CD14-positive monocyte (primary cell): ENCODE measurements at regions of chr11 and their contacts with region 1.

Region 1: GRCh38 chr11:122628810-122629555 is 26.5 kb upstream of the UBASH3B start:
- DNase-seq: peak; percentile 70 to 75 (median 70)
- H3K4me3 ChIP-seq: no peak overlapping the region
- H3K4me3 Mint-ChIP-seq: peak overlapping the region in 1 of 2 donors; percentile 29
- H3K27ac ChIP-seq: no peak overlapping the region
- H3K27ac Mint-ChIP-seq: peak overlapping the region in 1 of 7 donors; percentile 46
- H3K4me1 ChIP-seq: peaks cover 0 to 6% of the 10 kb centered on the region in 2 donors
- H3K4me1 Mint-ChIP-seq: peaks cover 14% of the 10 kb centered on the region
- H3K27me3 ChIP-seq: no peaks in the 10 kb centered on the region
- H3K27me3 Mint-ChIP-seq: peaks cover 0 to 10% (median 3%) of the 10 kb centered on the region in 3 donors
- CTCF ChIP-seq: peak; percentile 84

Region 2: GRCh38 chr11:122754553-122755322 is 125.8 kb after region 1 on chr11:
- intact Hi-C with region 1: loop called (anchors 2 to 5 kb)
- DNase-seq: peak; percentile 29 to 60 (median 55)
- H3K4me3 ChIP-seq: no peak overlapping the region
- H3K4me3 Mint-ChIP-seq: peak overlapping the region in 1 of 2 donors; percentile 55
- H3K27ac ChIP-seq: peak overlapping the region in 1 of 2 donors; percentile 76
- H3K27ac Mint-ChIP-seq: peak overlapping the region in 5 of 7 donors; percentile 38 to 95 (median 91)
- H3K4me1 ChIP-seq: peaks cover 32 to 47% of the 10 kb centered on the region in 2 donors
- H3K4me1 Mint-ChIP-seq: peaks cover 45% of the 10 kb centered on the region
- H3K27me3 ChIP-seq: no peaks in the 10 kb centered on the region
- H3K27me3 Mint-ChIP-seq: peaks cover 0 to 3% (median 1%) of the 10 kb centered on the region in 3 donors
- CTCF ChIP-seq: peak; percentile 83

Region 3: DNA sequence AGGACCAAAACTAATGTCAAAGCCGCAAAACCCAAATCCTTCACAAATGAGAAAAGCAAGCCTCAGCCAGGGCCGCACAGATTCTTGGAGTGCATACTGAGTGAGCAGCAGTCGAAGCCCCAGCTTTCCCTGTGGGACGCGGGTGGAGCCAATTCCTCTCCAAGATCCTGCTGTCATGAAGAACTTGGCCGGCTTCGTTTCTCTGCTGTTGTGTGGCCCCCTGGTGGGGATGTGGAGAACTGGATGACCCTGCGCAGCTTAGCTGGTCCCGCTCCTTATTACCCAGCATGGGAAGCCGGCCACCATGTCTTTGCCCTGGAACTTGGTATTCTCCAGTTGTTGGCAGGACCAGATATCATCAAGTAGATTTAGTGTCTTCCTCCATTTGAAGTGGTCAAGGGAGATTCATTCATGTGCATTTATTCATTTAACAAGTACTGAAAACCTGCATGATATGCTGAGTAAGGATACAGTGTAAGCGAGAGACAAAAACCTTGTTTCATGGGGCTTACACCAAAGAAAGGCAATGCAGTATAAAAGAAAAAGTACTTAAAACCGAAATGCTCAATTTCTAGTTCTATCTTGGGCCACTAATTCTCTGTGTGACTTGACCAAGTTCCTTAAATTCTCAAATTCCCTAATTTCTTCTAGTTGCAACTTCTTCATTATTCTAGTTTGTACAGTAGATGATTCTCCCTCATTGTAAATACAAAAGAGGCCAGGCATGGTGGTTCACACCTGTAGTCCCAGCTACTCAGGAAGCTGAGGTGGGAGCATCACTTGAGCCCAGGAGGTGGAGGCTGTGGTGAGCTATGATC is 152.6 kb after region 1 on chr11:
- intact Hi-C with region 1: loop called (anchors 1 to 5 kb)
- DNase-seq: peak; percentile 58 to 73 (median 71)
- H3K4me3 ChIP-seq: no peak overlapping the region
- H3K4me3 Mint-ChIP-seq: no peak overlapping the region
- H3K27ac ChIP-seq: peak overlapping the region in 1 of 2 donors; percentile 28
- H3K27ac Mint-ChIP-seq: peak overlapping the region in 4 of 7 donors; percentile 5 to 70 (median 50)
- H3K4me1 ChIP-seq: peaks cover 11 to 17% of the 10 kb centered on the region in 2 donors
- H3K4me1 Mint-ChIP-seq: peaks cover 26% of the 10 kb centered on the region
- H3K27me3 ChIP-seq: no peaks in the 10 kb centered on the region
- H3K27me3 Mint-ChIP-seq: peaks cover 0 to 4% (median 1%) of the 10 kb centered on the region in 3 donors
- CTCF ChIP-seq: peak; percentile 88

Region 4: GRCh38 chr11:122843281-122844141 is 214.5 kb after region 1 on chr11:
- intact Hi-C with region 1: loop called in 1 of 2 experiments (anchors 10 kb)
- DNase-seq: no peak
- H3K4me3 ChIP-seq: no peak overlapping the region
- H3K4me3 Mint-ChIP-seq: no peak overlapping the region
- H3K27ac ChIP-seq: no peak overlapping the region
- H3K27ac Mint-ChIP-seq: no peak overlapping the region
- H3K4me1 ChIP-seq: peaks cover 5 to 15% of the 10 kb centered on the region in 2 donors
- H3K4me1 Mint-ChIP-seq: peaks cover 17% of the 10 kb centered on the region
- H3K27me3 ChIP-seq: peaks cover 0 to 2% of the 10 kb centered on the region in 2 donors
- H3K27me3 Mint-ChIP-seq: peaks cover 4 to 7% (median 4%) of the 10 kb centered on the region in 3 donors
- CTCF ChIP-seq: no peak

Region 5: GRCh38 chr11:123054301-123055065 is 425.5 kb after region 1 on chr11:
- intact Hi-C with region 1: loop called in 1 of 2 experiments (anchors 5 kb)
- DNase-seq: peak; percentile 54 to 75 (median 59)
- H3K4me3 ChIP-seq: no peak overlapping the region
- H3K4me3 Mint-ChIP-seq: no peak overlapping the region
- H3K27ac ChIP-seq: peak overlapping the region in 1 of 2 donors; percentile 5
- H3K27ac Mint-ChIP-seq: peak overlapping the region in 3 of 7 donors; percentile 55 to 76 (median 63)
- H3K4me1 ChIP-seq: peaks cover 7 to 20% of the 10 kb centered on the region in 2 donors
- H3K4me1 Mint-ChIP-seq: peaks cover 32% of the 10 kb centered on the region
- H3K27me3 ChIP-seq: no peaks in the 10 kb centered on the region
- H3K27me3 Mint-ChIP-seq: peaks cover 0 to 2% (median 0%) of the 10 kb centered on the region in 3 donors
- CTCF ChIP-seq: peak; percentile 82